Mammary epithelial cell (primary cell): ENCODE measurements at regions of chr3 and their contacts with region 1.

Region 1: GRCh38 chr3:129278439-129278970 is at the start of gene HMCES:
- DNase-seq: peak; percentile 89
- H3K4me3 ChIP-seq: peak within 1 kb of the TSS; percentile 72 to 92 (median 83)
- H3K27ac ChIP-seq: peak within 1 kb of the TSS; percentile 87
- H3K4me1 ChIP-seq: peaks cover 26% of the 10 kb centered on the region
- H3K27me3 ChIP-seq: no peaks in the 10 kb centered on the region
- CTCF ChIP-seq: no peak
- total RNA-seq, gene HMCES: 36.2 to 77.8 TPM

Region 2: GRCh38 chr3:129316131-129317013 is 37.9 kb after region 1 on chr3:
- CTCF ChIA-PET with region 1: interaction called, 14 read pairs
- dilution Hi-C with region 1: loop called (anchors 5 kb)
- in situ Hi-C with region 1: no loop called
- intact Hi-C with region 1: loop called (anchors 1 kb)
- DNase-seq: peak; percentile 80
- H3K4me3 ChIP-seq: peak overlapping the region; percentile 67 to 94 (median 89)
- H3K27ac ChIP-seq: peak overlapping the region; percentile 72
- H3K4me1 ChIP-seq: peaks cover 21% of the 10 kb centered on the region
- H3K27me3 ChIP-seq: no peaks in the 10 kb centered on the region
- CTCF ChIP-seq: peak; percentile 32 to 58

Region 3: DNA sequence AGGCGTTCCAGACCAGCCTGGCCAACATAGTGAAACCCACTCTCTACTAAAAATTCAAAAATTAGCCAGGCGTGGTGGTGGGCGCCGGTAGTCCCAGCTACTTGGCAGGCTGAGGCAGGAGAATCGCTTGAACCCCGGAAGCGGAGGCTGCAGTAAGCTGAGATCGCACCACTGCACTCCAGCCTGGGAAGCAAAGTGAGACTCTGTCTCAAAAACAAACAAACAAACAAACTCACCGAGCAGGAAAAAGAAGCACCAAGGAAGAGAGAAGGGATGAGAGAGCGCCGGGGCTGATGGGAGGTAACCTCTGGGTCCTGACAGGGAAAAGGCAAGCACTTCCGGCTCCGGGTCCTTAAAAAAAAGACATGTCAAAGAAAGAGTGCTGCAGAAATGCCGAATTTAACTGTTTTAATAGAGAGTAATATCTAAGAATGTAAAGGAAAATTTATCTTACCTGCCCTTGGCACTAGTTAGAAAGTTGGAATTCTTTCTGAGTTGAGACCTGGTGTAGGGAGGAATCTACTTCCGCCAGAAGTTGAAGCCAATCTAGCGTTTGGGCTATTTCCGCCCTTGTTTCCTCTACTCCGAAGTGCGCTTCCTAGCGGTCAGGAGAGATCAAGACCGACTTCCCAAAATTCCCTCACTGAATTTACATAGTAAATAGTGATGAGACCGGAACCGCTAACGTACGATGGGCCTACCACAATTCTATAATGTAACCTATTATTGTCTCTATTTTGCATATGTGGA is 120.8 kb after region 1 on chr3:
- CTCF ChIA-PET with region 1: no interaction called
- dilution Hi-C with region 1: no loop called
- in situ Hi-C with region 1: no loop called
- intact Hi-C with region 1: no loop called
- DNase-seq: peak; percentile 94
- H3K4me3 ChIP-seq: peak overlapping the region; percentile 63 to 72 (median 64)
- H3K27ac ChIP-seq: peak overlapping the region; percentile 95
- H3K4me1 ChIP-seq: peaks cover 3% of the 10 kb centered on the region
- H3K27me3 ChIP-seq: no peaks in the 10 kb centered on the region
- CTCF ChIP-seq: peak; percentile 92 to 95

Region 4: DNA sequence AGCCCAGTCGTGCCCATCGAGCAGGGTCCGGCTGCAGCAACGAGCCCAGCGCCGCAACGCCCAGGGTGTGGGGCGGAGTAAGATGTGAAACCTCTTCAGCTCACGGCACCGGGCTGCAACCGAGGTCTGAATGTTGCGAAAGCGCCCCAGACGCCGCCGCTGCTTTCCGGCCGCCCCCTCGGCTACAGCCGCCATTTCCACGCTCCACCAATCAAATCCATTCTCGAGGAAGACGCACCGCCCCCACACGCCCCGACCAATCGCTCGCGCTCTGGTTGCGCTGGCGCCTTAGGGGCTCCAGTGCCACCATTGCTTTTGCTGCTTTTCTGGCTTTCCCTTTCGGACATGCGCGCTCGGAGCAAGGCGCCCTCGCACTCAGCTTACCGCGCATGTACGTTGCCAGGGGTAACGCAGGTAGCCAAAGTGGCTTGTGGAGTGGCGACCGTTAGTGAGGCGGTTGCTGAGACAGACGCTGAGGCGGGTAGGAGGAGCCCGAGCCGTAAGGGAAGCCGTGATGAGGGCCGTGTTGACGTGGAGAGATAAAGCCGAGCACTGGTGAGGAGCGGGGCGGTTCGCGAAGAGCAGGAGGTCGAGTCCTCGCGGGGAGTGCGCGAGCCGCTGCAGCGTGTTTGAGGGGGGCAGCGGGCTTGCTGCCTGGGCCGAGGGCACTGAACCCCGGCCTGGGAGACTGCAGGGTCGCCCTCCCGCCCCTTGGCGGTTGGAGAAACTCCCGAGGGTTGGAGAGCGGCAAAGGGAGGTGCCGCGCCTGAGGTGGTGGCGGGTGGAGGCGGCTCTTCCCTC is 161.5 kb after region 1 on chr3 and contains the starts of genes IFT122 and MBD4:
- CTCF ChIA-PET with region 1: no interaction called
- dilution Hi-C with region 1: no loop called
- in situ Hi-C with region 1: no loop called
- intact Hi-C with region 1: loop called (anchors 2 kb)
- DNase-seq: peak; percentile 100
- H3K4me3 ChIP-seq: peak within 1 kb of the TSS; percentile 72 to 89 (median 78)
- H3K27ac ChIP-seq: peak within 1 kb of the TSS; percentile 80
- H3K4me1 ChIP-seq: peaks cover 20% of the 10 kb centered on the region
- H3K27me3 ChIP-seq: no peaks in the 10 kb centered on the region
- CTCF ChIP-seq: no peak
- total RNA-seq, gene IFT122: 14.7 to 17.2 TPM
- total RNA-seq, gene MBD4: 35.0 to 35.8 TPM